ENCODE measurements at regions of chr5 and their contacts with region 1.

Region 1: DNA sequence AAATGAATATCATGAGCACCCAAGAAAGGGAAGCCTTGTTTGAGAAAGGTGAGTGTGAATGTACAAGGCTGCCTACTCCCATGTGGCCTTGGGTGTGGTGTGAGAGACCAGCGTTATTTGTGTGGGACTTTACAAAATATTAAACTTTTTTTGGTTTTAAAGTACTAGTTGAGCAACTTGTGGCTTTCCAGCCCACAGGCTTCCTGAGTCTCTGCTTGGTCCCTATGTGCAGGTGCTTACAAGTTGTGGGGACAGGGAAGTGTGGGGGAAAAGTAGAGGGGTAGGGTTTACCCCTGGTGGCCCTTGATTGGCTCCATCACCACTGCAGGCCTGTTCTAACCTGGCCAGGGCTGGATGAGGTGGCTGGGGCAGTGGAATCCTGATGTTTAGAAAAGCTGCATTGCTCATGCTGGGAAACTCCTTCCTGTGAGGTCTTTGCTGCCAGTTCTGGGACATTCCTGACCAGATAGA is 19.7 kb downstream of the PTTG1 start:
- DNase-seq: no peak
- H3K4me3 ChIP-seq: no peak overlapping the region
- H3K27ac ChIP-seq: no peak overlapping the region
- H3K4me1 ChIP-seq: peaks cover 0 to 7% (median 6%) of the 10 kb centered on the region in 4 donors
- H3K27me3 ChIP-seq: no peaks in the 10 kb centered on the region
- CTCF ChIP-seq: no peak
- EP300 ChIP-seq: no peak
- POLR2A ChIP-seq: no peak

Region 2: GRCh38 chr5:159773062-159773924 is 668.1 kb before region 1 on chr5:
- intact Hi-C with region 1: no loop called
- DNase-seq: peak; percentile 91
- H3K4me3 ChIP-seq: peak overlapping the region in 3 of 4 donors; percentile 36 to 46 (median 37)
- H3K27ac ChIP-seq: peak overlapping the region; percentile 59 to 80 (median 66)
- H3K4me1 ChIP-seq: peaks cover 0 to 13% (median 8%) of the 10 kb centered on the region in 4 donors
- H3K27me3 ChIP-seq: no peaks in the 10 kb centered on the region
- CTCF ChIP-seq: no peak
- EP300 ChIP-seq: peak in 1 of 4 donors; percentile 29
- POLR2A ChIP-seq: no peak

Region 3: DNA sequence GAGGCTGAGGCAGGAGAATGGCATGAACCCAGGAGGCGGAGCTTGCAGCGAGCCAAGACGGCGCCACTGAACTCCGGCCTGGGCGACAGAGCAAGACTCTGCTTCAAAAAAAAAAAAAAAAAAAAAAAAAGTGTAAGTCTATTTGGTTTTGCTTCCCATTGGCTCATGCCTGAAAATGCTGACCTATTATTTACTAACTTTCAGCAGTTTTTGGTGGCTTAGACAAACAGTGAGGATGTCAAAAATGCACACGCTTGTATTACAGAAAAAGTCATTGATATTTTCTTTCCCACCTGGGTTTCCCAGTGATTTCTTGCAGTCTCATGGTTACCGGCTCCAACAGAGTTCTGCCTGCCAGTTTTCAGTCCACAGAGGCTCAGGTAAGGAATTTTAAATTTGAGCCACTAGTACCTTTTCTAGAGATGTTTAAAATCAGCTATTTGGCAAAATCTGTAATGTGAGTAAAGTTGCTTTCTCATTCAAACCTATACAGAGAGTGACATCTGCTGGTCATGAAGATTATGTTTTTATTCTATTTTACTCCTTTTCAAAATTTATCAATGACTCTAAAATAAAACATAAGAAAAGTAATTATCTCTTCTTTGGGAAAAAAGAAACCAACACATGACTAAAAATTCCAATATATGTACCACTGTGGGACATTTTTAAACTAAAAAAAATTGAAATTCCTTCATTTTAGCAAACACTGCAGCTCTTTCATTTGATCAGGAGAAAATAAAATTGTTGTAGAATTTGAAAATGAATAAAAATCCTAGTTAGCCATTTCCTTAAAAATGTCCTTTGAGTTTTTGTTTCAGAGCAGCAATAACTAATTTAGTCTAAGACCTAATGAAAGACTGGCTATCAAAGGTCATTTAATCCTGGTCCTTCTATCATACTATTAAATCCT is 50.3 kb before region 1 on chr5:
- intact Hi-C with region 1: no loop called
- DNase-seq: no peak
- H3K4me3 ChIP-seq: no peak overlapping the region
- H3K27ac ChIP-seq: no peak overlapping the region
- H3K4me1 ChIP-seq: peaks cover 0 to 25% (median 9%) of the 10 kb centered on the region in 4 donors
- H3K27me3 ChIP-seq: no peaks in the 10 kb centered on the region
- CTCF ChIP-seq: peak in 1 of 4 experiments; percentile 31
- EP300 ChIP-seq: no peak
- POLR2A ChIP-seq: no peak

Region 4: GRCh38 chr5:160508780-160509361 is 67.5 kb after region 1 on chr5:
- intact Hi-C with region 1: loop called (anchors 5 kb)
- DNase-seq: peak; percentile 73
- H3K4me3 ChIP-seq: no peak overlapping the region
- H3K27ac ChIP-seq: no peak overlapping the region
- H3K4me1 ChIP-seq: peaks cover 0 to 5% (median 2%) of the 10 kb centered on the region in 4 donors
- H3K27me3 ChIP-seq: no peaks in the 10 kb centered on the region
- CTCF ChIP-seq: peak; percentile 65 to 83 (median 74)
- EP300 ChIP-seq: no peak
- POLR2A ChIP-seq: no peak